ENCODE measurements at regions of chr17 and their contacts with region 1.

Region 1: GRCh38 chr17:82496529-82497434 is 22.8 kb upstream of the FOXK2 start:
- H3K4me3 Mint-ChIP-seq: peak overlapping the region; percentile 78
- H3K27ac Mint-ChIP-seq: peak overlapping the region; percentile 79
- H3K4me1 Mint-ChIP-seq: peaks cover 34% of the 10 kb centered on the region
- H3K27me3 Mint-ChIP-seq: peaks cover 2% of the 10 kb centered on the region

Region 2: GRCh38 chr17:82424001-82424862 is 72.5 kb before region 1 on chr17:
- intact Hi-C with region 1: no loop called
- H3K4me3 Mint-ChIP-seq: no peak overlapping the region
- H3K27ac Mint-ChIP-seq: peak overlapping the region; percentile 13
- H3K4me1 Mint-ChIP-seq: peaks cover 32% of the 10 kb centered on the region
- H3K27me3 Mint-ChIP-seq: no peaks in the 10 kb centered on the region

Region 3: GRCh38 chr17:82518826-82519810 is 22.3 kb after region 1 on chr17 and contains the start of gene FOXK2:
- intact Hi-C with region 1: loop called (anchors 1 kb)
- H3K4me3 Mint-ChIP-seq: peak within 1 kb of the TSS; percentile 84
- H3K27ac Mint-ChIP-seq: peak within 1 kb of the TSS; percentile 81
- H3K4me1 Mint-ChIP-seq: peaks cover 28% of the 10 kb centered on the region
- H3K27me3 Mint-ChIP-seq: no peaks in the 10 kb centered on the region

Region 4: DNA sequence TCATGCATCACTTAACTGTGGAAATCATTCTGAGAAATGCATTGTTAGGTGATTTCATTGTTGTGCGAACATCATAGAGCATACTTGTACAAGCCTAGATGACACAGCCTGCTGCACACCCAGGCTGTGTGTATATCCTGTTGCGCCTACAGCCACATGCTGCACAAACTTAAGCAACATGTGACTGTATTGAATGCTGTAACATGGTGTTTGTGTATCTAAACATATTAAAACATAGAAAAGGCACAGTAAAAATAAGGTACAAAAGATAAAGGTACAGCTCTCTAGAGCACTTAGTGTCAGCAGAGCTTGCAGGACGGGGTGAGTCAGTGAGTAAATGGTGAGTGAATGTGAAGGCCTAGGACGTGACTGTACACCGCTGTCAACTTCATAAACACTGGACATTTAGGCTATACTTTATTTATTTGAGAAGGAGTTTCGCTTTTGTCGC is 34.7 kb after region 1 on chr17:
- intact Hi-C with region 1: no loop called
- H3K4me3 Mint-ChIP-seq: no peak overlapping the region
- H3K27ac Mint-ChIP-seq: peak overlapping the region; percentile 57
- H3K4me1 Mint-ChIP-seq: peaks cover 72% of the 10 kb centered on the region
- H3K27me3 Mint-ChIP-seq: no peaks in the 10 kb centered on the region

Region 5: DNA sequence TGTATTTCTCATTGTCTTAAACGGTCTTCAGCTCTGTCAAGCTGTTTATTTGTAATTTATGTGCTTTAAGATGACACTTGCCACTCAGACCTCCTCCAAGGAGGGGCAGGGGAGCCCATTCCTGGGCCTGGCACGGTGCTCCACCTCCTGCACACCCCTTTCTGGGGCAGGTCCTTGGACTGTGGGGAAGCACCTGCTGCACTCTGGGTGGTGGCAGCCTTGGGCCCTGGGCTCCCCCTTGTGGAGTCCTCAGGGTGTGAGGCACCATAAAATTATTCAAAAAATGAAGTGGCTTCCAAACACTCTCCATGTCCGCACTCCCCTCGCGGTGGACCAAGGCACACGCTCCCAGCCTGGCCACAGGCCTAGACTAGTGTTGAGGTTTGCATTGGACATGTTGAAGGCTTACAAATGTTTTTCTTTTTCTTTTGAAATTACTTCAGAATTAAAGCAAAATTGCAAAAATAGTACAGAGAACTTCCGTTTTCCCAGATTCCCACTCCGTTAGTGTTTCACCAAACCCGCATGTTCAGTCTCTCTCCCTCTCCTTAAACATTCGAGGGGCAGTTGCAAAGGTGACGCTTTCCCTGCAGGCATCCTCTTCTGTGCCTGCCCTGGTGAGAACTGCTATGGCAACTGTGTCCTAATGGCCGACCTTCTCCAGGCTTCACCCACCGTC is 55.1 kb after region 1 on chr17:
- intact Hi-C with region 1: no loop called
- H3K4me3 Mint-ChIP-seq: no peak overlapping the region
- H3K27ac Mint-ChIP-seq: no peak overlapping the region
- H3K4me1 Mint-ChIP-seq: peaks cover 65% of the 10 kb centered on the region
- H3K27me3 Mint-ChIP-seq: no peaks in the 10 kb centered on the region

Measured in dendritic cell treated with granulocyte-macrophage colony-stimulating factor and Interleukin-4, amounts not matched to agents 40 ng/mL and 50 ng/mL, for 4 days (primary cell).